Lower leg skin (tissue), 4 donors: ENCODE measurements at regions of chr12 and their contacts with region 1.

Region 1: GRCh38 chr12:51341259-51342007 is 5.0 kb downstream of the CELA1 start:
- DNase-seq: peak; percentile 76 to 92
- H3K4me3 ChIP-seq: no peak overlapping the region
- CTCF ChIP-seq: peak in 2 of 3 donors; percentile 69 to 94
- POLR2A ChIP-seq: no peak

Region 2: GRCh38 chr12:50603817-50604639 is 737.4 kb before region 1 on chr12:
- intact Hi-C with region 1: no loop called
- DNase-seq: no peak
- H3K4me3 ChIP-seq: no peak overlapping the region
- CTCF ChIP-seq: no peak
- POLR2A ChIP-seq: no peak

Region 3: DNA sequence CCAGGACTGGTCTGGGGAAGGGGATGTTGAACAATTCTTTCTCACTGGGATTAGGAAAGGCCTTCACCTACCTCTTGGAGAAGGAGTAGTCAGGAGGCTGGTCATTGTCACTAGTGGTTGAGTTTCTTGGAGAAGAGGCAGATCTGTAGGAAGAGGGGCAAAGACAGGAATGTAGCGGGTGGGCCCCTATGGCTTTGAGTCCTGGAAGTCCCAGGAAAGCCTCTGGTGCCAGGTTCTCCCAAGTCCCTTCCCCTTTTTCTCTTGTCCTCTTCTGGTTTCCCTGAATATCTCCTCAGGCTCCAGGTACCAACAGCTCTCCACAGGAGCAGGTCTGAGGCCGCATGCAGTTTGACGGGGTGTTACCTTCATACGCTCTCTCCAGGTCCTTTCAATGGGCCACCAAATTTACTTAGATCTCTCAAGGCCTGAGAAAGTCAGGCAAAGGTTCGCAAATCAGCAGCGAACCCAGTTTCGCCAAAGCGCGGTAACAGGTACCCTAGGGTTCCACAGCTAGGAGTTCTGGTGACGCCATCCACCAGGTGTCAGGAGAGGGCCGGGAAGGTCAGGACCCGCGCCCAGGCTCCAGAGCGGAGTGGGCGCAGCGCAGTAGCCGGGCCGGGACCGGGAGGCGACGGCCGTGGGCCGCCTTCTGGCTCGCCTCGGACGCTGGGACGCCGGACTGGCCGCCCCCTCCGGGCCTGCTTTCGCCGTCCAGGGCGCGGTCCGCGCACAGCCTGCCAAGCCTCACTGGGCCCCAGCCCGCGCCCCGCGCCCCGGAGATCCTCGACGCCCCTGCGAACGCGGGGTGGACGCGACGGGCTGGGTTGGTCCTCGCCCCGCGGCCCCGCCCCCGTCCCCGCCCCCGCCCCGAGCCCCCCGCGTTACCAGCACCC is 72.0 kb before region 1 on chr12:
- intact Hi-C with region 1: loop called (anchors 5 kb)
- DNase-seq: peak in 1 of 2 donors; percentile 89
- H3K4me3 ChIP-seq: peak overlapping the region; percentile 80
- CTCF ChIP-seq: no peak
- POLR2A ChIP-seq: no peak

Region 4: GRCh38 chr12:51391283-51392162 is 50.1 kb after region 1 on chr12 and contains the start of gene GALNT6:
- intact Hi-C with region 1: no loop called
- DNase-seq: peak in 1 of 2 donors; percentile 88
- H3K4me3 ChIP-seq: peak within 1 kb of the TSS; percentile 21
- CTCF ChIP-seq: no peak
- POLR2A ChIP-seq: no peak
- total RNA-seq, gene GALNT6: 1.3 to 16.4 (median 4.7) TPM

Region 5: GRCh38 chr12:52618216-52618615 is 1276.8 kb after region 1 on chr12 and contains the start of gene KRT73:
- intact Hi-C with region 1: no loop called
- DNase-seq: no peak
- H3K4me3 ChIP-seq: no peak within 1 kb of the TSS
- CTCF ChIP-seq: no peak
- POLR2A ChIP-seq: no peak
- total RNA-seq, gene KRT73: 3.0 to 15.3 (median 6.0) TPM